ENCODE measurements at regions of chr3 and their contacts with region 1.

Region 1: GRCh38 chr3:32947789-32948238 is 3.6 kb upstream of the CCR4 start:
- DNase-seq: peak; percentile 88 to 92
- ATAC-seq: peak; percentile 82
- H3K4me3 ChIP-seq: no peak overlapping the region
- H3K27ac ChIP-seq: no peak overlapping the region
- H3K4me1 ChIP-seq: no peaks in the 10 kb centered on the region
- H3K27me3 ChIP-seq: no peaks in the 10 kb centered on the region

Region 2: DNA sequence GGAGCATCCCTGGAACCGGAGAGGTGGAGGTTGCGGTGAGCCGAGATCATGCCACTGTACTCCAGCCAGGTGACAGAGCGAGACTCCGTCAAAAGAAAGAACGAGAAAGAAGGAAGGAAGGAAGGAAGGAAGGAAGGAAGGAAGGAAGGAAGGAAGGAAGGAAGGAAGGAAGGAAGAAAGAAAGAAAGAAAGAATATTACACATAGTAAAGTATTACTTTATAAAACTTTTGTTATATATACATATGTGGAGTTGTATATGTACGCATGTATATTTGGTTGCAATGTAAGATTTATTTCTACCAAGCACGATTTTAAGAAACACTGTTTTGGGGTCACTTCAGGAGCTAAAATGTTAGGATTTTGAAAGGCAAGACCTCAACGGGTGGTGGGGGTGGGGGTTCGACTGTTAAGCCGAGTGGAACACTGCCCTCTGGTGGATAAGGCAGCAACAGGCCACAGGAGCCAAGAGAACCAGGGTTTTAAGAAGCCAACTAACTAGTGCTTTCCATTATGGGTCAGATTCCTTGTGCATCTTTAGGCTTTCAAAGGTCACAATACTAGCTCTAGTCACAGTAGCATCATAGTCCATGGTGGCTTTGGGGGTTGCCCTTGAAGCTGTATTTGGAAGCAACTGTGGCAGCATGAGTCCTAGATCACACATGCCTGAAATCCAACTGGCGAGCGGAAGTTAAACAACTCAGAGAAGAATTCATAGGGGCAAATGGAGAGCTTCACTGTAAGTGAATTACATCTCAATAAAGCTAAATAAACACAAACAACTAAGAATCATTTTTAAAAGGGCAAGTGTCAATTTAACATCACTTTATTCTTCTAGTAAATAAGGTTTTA is 126.6 kb after region 1 on chr3:
- intact Hi-C with region 1: loop called (anchors 2 to 10 kb)
- DNase-seq: peak in 1 of 2 donors; percentile 63
- ATAC-seq: peak; percentile 68
- H3K4me3 ChIP-seq: no peak overlapping the region
- H3K27ac ChIP-seq: no peak overlapping the region
- H3K4me1 ChIP-seq: no peaks in the 10 kb centered on the region
- H3K27me3 ChIP-seq: no peaks in the 10 kb centered on the region

Measured in aorta (tissue), 5 donors.